PC-9 (cell line): ENCODE measurements at regions of chr13 and their contacts with region 1.

Region 1: DNA sequence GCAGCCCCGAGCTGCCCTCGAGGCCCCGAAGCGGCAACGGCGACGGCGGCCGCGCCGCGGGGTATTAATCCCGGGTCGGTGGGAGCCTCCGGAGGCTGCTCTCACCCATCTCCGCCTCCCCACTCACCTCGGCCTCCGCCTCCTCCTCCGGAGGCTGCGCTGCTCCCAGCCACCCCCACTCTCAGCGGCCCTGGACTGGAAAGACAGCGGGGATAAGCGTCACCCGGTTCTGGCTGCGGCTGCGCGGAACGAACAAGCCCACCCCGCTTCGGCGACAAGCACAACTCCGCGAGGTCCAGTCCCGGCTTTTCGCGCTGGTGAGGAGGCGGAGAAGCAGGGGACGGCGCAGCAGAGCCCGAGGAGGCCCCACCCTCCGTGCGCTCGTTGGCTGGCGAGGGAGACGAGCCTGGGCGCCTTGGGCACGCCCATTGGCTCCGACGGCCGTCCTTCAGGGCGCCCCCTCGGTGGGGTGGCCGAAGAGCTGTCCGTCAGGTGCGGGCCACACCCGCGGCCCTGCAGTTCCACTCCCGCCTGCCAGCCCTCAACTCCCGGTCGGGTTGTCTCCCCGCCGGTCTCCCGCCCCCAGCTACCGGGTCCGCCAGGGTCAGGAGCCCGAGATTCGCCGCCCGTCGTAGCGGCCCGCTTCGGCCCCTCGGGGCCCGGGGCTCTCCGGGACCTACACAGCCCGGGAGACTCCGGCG is at the start of gene ZMYM5:
- DNase-seq: peak; percentile 94 to 96
- H3K4me3 ChIP-seq: peak within 1 kb of the TSS; percentile 68
- H3K27ac ChIP-seq: peak within 1 kb of the TSS; percentile 81
- H3K4me1 ChIP-seq: peaks cover 29% of the 10 kb centered on the region
- H3K27me3 ChIP-seq: no peaks in the 10 kb centered on the region
- CTCF ChIP-seq: no peak
- total RNA-seq, gene ZMYM5: 10.0 and 10.3 TPM in 2 replicates

Region 2: DNA sequence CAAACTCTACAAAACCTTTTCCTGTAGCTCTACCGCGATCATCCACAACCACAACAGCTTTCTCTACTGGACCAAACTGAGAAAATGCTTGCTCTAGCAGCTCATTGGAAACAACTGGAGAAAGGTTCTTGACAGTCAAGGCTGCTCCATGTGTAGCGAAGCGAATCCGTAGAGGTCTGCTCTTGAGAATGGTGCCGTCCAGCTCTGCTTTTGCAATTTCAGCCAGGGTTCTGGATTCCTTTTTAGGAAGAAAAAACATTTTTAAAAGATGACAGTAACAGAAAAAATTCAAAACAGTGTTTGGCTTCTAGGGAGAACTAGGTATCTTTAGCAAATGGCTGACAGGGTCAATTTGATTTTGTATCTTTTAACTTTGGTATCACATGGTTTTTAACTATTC is 91.2 kb before region 1 on chr13:
- CTCF ChIA-PET with region 1: no interaction called
- POLR2A ChIA-PET with region 1: interaction called, 27 read pairs
- intact Hi-C with region 1: no loop called
- DNase-seq: no peak
- H3K4me3 ChIP-seq: no peak overlapping the region
- H3K27ac ChIP-seq: no peak overlapping the region
- H3K4me1 ChIP-seq: no peaks in the 10 kb centered on the region
- H3K27me3 ChIP-seq: no peaks in the 10 kb centered on the region
- CTCF ChIP-seq: no peak

Region 3: DNA sequence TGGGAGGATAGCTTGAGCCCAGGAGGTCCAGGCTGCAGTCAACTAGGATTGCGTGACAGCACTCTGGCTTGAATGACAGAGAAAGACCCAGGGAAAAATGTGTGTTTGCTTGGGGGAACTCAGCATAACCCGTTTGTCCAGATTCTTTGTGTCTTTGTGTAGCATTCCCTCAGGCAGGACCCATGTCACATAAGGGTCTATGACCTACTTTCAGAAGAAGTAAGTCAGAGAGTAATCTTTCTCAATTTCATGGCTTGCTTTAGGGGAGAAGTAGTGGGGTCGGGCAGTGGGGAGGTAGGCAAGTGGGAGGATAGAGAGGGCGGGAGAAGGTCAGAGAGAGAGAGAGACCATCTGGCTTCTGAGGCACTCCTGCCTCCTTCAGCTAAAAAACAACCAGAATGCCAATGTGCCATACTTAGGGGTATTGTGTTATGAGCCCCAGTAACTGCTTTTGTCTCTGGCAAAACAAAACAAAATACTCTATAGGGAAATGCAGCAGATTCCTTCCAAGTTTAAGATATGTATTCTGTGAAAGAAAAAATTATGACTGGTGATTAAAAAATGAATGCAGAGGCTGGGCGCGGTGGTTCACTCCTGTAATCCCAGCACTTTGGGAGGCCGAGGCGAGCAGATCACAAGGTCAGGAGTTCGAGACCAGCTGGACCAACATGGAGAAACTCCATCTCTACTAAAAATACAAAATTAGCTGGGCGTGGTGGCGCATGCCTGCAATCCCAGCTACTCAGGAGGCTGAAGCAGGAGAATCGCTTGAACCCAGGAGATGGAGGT is 68.6 kb before region 1 on chr13:
- CTCF ChIA-PET with region 1: no interaction called
- POLR2A ChIA-PET with region 1: no interaction called
- intact Hi-C with region 1: loop called (anchors 5 kb)
- DNase-seq: peak; percentile 71 to 99
- H3K4me3 ChIP-seq: peak overlapping the region; percentile 30; the same call in 1 of the 2 replicates
- H3K27ac ChIP-seq: peak overlapping the region; percentile 99
- H3K4me1 ChIP-seq: peaks cover 55% of the 10 kb centered on the region
- H3K27me3 ChIP-seq: no peaks in the 10 kb centered on the region
- CTCF ChIP-seq: no peak

Region 4: DNA sequence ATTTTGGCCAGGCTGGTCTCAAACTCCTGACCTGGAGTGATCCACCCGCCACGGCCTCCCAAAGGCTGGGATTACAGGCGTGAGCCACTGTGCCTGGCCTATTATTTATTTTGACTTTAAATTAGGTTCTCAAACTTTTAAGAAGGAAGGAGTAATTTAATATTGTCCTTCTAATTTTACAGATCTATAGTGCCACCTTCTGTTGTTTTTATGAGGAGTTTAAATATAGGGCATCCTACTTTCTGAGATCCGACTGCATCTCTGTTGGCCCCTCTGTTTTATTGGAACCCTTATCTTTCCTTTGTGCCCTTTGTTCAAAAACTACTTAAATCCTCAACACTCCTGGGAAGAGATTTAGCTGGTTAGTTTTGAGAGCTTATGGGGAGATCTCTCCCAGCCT is 25.3 kb after region 1 on chr13:
- CTCF ChIA-PET with region 1: interaction called, 16 read pairs
- POLR2A ChIA-PET with region 1: no interaction called
- intact Hi-C with region 1: no loop called
- DNase-seq: no peak
- H3K4me3 ChIP-seq: no peak overlapping the region
- H3K27ac ChIP-seq: no peak overlapping the region
- H3K4me1 ChIP-seq: no peaks in the 10 kb centered on the region
- H3K27me3 ChIP-seq: no peaks in the 10 kb centered on the region
- CTCF ChIP-seq: peak; percentile 52; the same call in 1 of the 2 replicates